Activated CD8-positive, alpha-beta T cell treated with anti-CD3 and anti-CD28 coated beads, Interleukin-2, amount 10 ng/mL, durations not matched to agents 7 days and 5 days (primary cell): ENCODE measurements at regions of chr16 and their contacts with region 1.

Region 1: GRCh38 chr16:80526425-80527061 is 14.2 kb upstream of the DYNLRB2 start:
- DNase-seq: peak; percentile 72
- ATAC-seq: peak; percentile 57
- H3K4me3 Mint-ChIP-seq: no peak overlapping the region
- H3K27ac Mint-ChIP-seq: no peak overlapping the region
- H3K4me1 Mint-ChIP-seq: peaks cover 11% of the 10 kb centered on the region
- H3K27me3 Mint-ChIP-seq: peaks cover 26% of the 10 kb centered on the region

Region 2: DNA sequence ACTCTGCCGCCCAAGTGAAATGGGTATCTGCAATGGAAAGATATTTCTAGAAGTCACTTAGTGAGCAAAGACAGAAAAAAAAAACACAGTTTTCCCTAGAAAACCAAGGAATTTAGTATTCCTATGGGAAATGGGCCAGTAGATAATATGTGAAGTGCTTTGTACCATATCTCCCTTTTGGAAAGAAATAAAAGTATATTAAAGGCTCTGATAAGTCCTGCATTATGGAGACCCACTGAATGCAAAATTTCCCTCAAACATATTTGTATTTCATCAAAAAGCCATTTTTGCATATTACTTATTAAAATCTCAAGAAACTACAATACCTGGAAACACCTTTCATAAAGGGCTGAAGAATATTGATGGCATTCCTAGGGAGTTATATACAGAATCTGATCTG is 37.4 kb before region 1 on chr16:
- CTCF ChIA-PET with region 1: no interaction called
- POLR2A ChIA-PET with region 1: no interaction called
- DNase-seq: no peak
- ATAC-seq: no peak
- H3K4me3 Mint-ChIP-seq: no peak overlapping the region
- H3K27ac Mint-ChIP-seq: no peak overlapping the region
- H3K4me1 Mint-ChIP-seq: no peaks in the 10 kb centered on the region
- H3K27me3 Mint-ChIP-seq: peaks cover 10% of the 10 kb centered on the region

Region 3: DNA sequence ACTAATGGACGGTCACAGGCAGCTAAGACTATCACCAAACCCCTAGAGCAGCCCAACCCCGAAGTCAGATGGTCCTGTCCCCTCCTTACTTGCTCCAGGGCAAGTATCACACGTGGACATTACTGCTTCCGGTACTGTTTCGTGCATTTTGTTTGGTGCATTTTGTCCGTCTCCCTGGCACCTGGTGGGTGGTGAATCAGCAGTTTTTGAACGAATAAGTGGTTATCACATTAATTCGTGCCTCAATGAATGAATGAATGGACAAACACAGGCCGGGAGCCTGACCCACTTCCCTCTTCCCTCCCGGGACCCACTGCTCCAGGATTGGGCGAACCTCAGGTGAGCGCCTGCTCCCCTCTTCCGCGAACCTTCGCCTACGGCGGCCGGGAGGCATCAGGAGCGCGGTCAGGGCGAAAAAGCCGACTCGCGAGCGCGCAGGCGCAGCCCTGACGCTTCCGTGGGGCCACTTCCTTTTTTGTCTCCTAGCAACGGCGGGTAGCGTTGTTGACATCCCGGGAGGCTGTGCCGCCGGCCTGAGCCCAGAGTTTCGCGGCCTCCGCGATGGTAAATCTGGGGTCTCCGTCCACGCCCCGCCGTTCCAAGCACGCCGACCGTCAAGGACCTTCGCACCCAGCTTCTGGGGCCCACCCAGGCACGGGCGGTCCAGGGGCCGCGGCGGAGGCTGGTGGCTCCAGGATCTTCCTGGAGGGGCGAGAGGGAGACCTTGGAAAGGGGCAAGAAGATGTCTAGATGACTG is 14.2 kb after region 1 on chr16 and contains the start of gene DYNLRB2:
- CTCF ChIA-PET with region 1: interaction called, 26 read pairs
- POLR2A ChIA-PET with region 1: interaction called, 4 read pairs
- DNase-seq: peak; percentile 94
- ATAC-seq: peak; percentile 96
- H3K4me3 Mint-ChIP-seq: peak within 1 kb of the TSS; percentile 92
- H3K27ac Mint-ChIP-seq: peak within 1 kb of the TSS; percentile 96
- H3K4me1 Mint-ChIP-seq: peaks cover 18% of the 10 kb centered on the region
- H3K27me3 Mint-ChIP-seq: peaks cover 7% of the 10 kb centered on the region
- total RNA-seq, gene DYNLRB2: not detected

Region 4: GRCh38 chr16:80580109-80580832 is 53.7 kb after region 1 on chr16:
- CTCF ChIA-PET with region 1: interaction called, 57 read pairs
- POLR2A ChIA-PET with region 1: no interaction called
- DNase-seq: peak; percentile 88
- ATAC-seq: peak; percentile 86
- H3K4me3 Mint-ChIP-seq: peak overlapping the region; percentile 57
- H3K27ac Mint-ChIP-seq: peak overlapping the region; percentile 92
- H3K4me1 Mint-ChIP-seq: peaks cover 68% of the 10 kb centered on the region
- H3K27me3 Mint-ChIP-seq: peaks cover 2% of the 10 kb centered on the region

Region 5: DNA sequence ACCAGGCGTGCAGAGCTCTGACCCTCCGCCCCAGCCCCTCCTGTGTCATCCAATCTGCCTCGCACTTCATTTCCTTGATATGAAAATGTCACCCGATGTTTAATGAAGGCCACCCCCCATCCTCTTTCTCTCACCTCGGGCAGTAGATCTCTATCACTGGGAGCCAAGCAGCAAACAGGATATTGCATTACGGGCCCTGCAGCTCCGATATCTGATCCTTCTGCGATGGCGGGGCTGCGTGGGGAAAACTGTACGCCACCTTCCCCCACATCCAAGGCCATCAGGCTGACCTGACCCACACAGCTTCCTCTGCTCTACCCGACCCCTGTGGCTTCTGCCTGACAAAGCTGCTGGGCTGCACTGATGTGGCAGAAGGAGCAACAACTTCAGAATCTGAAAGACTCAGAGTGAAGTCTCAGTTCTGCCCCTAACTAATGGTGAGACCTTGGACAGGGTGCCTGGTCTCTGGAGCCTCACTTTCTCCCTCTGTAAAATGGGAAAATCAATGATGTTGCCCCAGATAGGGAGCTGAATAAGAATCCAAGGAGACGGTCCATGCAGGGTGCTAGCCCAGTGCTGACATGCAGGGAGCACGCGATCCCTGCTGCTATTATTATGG is 89.3 kb after region 1 on chr16:
- CTCF ChIA-PET with region 1: interaction called, 10 read pairs
- POLR2A ChIA-PET with region 1: no interaction called
- DNase-seq: no peak
- ATAC-seq: no peak
- H3K4me3 Mint-ChIP-seq: no peak overlapping the region
- H3K27ac Mint-ChIP-seq: no peak overlapping the region
- H3K4me1 Mint-ChIP-seq: no peaks in the 10 kb centered on the region
- H3K27me3 Mint-ChIP-seq: no peaks in the 10 kb centered on the region

Region 6: GRCh38 chr16:80746231-80746630 is 219.7 kb after region 1 on chr16:
- CTCF ChIA-PET with region 1: interaction called, 15 read pairs
- POLR2A ChIA-PET with region 1: no interaction called
- DNase-seq: no peak
- ATAC-seq: no peak
- H3K4me3 Mint-ChIP-seq: no peak overlapping the region
- H3K27ac Mint-ChIP-seq: no peak overlapping the region
- H3K4me1 Mint-ChIP-seq: peaks cover 25% of the 10 kb centered on the region
- H3K27me3 Mint-ChIP-seq: no peaks in the 10 kb centered on the region

Region 7: GRCh38 chr16:80824718-80825364 is 298.3 kb after region 1 on chr16:
- CTCF ChIA-PET with region 1: interaction called, 132 read pairs
- POLR2A ChIA-PET with region 1: no interaction called
- DNase-seq: peak; percentile 67
- ATAC-seq: no peak
- H3K4me3 Mint-ChIP-seq: no peak overlapping the region
- H3K27ac Mint-ChIP-seq: no peak overlapping the region
- H3K4me1 Mint-ChIP-seq: no peaks in the 10 kb centered on the region
- H3K27me3 Mint-ChIP-seq: peaks cover 21% of the 10 kb centered on the region